ENCODE measurements at regions of chr7 and their contacts with region 1.

Region 1: DNA sequence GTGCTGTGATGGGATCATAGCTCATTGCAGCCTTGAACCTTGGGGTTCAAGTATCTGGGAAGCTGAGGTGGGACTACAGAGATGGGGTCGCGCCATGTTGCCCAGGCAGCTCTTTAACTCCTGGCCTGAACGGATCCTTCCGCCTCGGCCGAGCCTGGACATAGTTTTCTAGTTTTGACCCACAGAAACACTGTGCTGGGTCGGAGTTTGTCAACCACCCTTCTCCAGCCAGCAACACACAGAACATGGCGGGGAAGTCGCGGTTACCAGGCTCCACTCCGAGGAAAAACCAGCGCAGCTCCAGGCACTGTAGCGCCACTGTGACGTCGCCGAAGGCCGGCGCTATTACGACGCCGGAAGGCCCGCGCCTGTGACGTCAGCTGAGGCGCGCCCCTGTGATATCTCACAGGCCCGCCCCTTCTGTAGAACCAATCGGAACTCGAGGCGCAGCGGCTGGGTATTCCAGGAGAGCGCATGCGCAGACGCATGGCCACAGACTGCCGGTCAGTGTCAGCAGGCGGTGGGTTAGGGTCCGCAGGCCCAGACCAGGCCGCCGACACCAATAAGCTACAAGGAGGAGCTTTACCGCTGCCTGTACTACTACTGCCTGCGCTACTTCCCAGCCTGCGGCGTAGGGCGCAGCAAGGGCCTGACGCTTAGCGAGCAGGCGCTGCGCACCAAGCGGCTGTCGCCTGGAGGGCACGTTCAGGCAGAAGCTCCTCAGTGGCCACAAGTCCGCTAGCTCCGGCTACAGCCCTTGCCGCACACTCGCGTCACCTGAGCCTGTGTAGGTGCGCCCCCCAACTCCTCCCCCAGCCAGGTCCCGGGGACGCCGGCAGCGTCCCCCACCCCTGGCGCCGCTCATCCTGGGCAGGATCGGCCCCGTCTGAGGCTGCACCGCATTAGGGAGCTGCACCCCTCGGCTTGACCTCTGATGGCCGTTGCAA is 135.2 kb upstream of the KCTD7 start:
- DNase-seq: peak; percentile 91
- ATAC-seq: peak; percentile 99
- H3K4me3 ChIP-seq: peak overlapping the region; percentile 64 to 83
- H3K27ac ChIP-seq: peak overlapping the region; percentile 95
- H3K4me1 ChIP-seq: peaks cover 5% of the 10 kb centered on the region; the same call in 1 of the 2 replicates
- H3K27me3 ChIP-seq: no peaks in the 10 kb centered on the region
- CTCF ChIP-seq: no peak

Region 2: GRCh38 chr7:66167773-66168387 is 325.6 kb before region 1 on chr7:
- CTCF ChIA-PET with region 1: no interaction called
- POLR2A ChIA-PET with region 1: no interaction called
- in situ Hi-C with region 1: no loop called
- intact Hi-C with region 1: no loop called
- DNase-seq: peak; percentile 46
- ATAC-seq: peak; percentile 78
- H3K4me3 ChIP-seq: no peak overlapping the region
- H3K27ac ChIP-seq: no peak overlapping the region
- H3K4me1 ChIP-seq: peaks cover 4% of the 10 kb centered on the region; the same call in 1 of the 2 replicates
- H3K27me3 ChIP-seq: no peaks in the 10 kb centered on the region
- CTCF ChIP-seq: no peak

Region 3: DNA sequence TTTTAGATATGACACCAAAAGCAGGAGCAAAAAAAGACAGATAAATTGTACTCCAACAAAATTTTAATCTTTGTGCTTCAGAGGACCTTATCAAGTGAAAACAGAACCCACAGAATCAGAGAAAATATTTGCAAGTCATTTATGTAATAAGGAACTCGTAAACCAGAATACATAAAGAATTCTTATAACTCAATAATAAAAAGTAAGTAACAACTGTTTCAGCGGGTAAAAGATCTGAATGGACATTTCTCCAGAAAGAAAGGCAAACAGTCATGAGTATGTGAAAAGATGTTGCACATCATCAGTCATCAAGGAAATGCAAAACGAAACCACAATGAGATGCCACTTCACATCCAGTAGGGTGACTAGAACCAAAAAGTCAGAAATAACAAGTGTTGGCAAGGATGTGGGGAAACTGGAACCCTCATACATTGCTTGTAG is 32.6 kb before region 1 on chr7:
- CTCF ChIA-PET with region 1: no interaction called
- POLR2A ChIA-PET with region 1: no interaction called
- in situ Hi-C with region 1: no loop called
- intact Hi-C with region 1: no loop called
- DNase-seq: no peak
- ATAC-seq: no peak
- H3K4me3 ChIP-seq: no peak overlapping the region
- H3K27ac ChIP-seq: no peak overlapping the region
- H3K4me1 ChIP-seq: no peaks in the 10 kb centered on the region
- H3K27me3 ChIP-seq: no peaks in the 10 kb centered on the region
- CTCF ChIP-seq: no peak

Region 4: DNA sequence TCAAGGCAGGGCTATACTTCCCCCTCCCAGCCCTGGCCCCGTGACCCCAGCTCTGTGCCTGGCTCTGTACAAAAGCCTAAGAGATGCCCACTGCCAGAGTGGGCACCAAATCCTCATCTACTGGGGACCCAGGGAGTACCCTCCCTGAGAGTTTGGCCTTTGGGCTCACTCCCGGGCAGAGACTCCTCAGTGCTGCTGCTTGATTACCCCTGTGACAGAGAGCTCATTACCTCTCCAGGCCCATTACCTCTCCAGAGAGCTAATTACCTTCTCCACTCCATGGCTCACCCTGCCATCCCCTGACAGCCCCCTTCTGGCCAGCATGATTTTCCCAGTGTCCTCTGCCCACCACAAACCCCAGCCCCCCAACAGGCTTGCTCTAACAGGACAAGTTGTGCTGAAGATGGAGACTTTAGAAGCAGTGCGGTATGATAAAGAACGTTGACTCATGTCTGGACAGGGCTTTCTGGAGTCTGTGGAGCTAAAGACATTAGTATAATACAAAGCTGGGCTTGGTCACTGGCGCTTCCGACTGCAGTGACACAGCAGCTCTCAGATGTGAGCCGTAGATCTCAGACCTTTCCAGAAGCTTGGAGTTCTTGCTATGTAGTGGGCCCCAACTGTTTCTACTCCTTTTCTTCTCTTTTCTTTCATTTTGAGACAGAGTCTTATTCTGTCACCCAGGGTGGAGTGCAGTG is 23.9 kb after region 1 on chr7:
- CTCF ChIA-PET with region 1: interaction called, 10 read pairs
- POLR2A ChIA-PET with region 1: no interaction called
- in situ Hi-C with region 1: no loop called
- intact Hi-C with region 1: no loop called
- DNase-seq: no peak
- ATAC-seq: no peak
- H3K4me3 ChIP-seq: no peak overlapping the region
- H3K27ac ChIP-seq: no peak overlapping the region
- H3K4me1 ChIP-seq: no peaks in the 10 kb centered on the region
- H3K27me3 ChIP-seq: no peaks in the 10 kb centered on the region
- CTCF ChIP-seq: no peak

Measured in Panc1 (cell line).